Right cardiac atrium (tissue), 5 donors: ENCODE measurements at regions of chr1 and their contacts with region 1.

Region 1: GRCh38 chr1:35988237-35988636 is 57.3 kb downstream of the AGO3 start:
- DNase-seq: no peak
- ATAC-seq: no peak
- H3K4me3 ChIP-seq: no peak overlapping the region
- H3K27ac ChIP-seq: no peak overlapping the region
- H3K4me1 ChIP-seq: no peaks in the 10 kb centered on the region
- H3K27me3 ChIP-seq: no peaks in the 10 kb centered on the region

Region 2: GRCh38 chr1:35622510-35623178 is 365.6 kb before region 1 on chr1:
- intact Hi-C with region 1: loop called in 1 of 4 experiments (anchors 10 kb)
- DNase-seq: no peak
- ATAC-seq: no peak
- H3K4me3 ChIP-seq: no peak overlapping the region
- H3K27ac ChIP-seq: no peak overlapping the region
- H3K4me1 ChIP-seq: no peaks in the 10 kb centered on the region
- H3K27me3 ChIP-seq: no peaks in the 10 kb centered on the region

Region 3: GRCh38 chr1:35882945-35883634 is 105.1 kb before region 1 on chr1 and contains the start of gene AGO1:
- intact Hi-C with region 1: no loop called
- DNase-seq: peak; percentile 95 to 98 (median 97)
- ATAC-seq: peak; percentile 98
- H3K4me3 ChIP-seq: peak within 1 kb of the TSS; percentile 78
- H3K27ac ChIP-seq: peak within 1 kb of the TSS; percentile 42
- H3K4me1 ChIP-seq: peaks cover 13% of the 10 kb centered on the region
- H3K27me3 ChIP-seq: no peaks in the 10 kb centered on the region
- total RNA-seq, gene AGO1: 26.9 to 35.4 (median 29.8) TPM

Region 4: GRCh38 chr1:36099681-36100341 is 111.6 kb after region 1 on chr1:
- intact Hi-C with region 1: no loop called
- DNase-seq: peak; percentile 81 to 95 (median 93)
- ATAC-seq: peak; percentile 79 to 83
- H3K4me3 ChIP-seq: no peak overlapping the region
- H3K27ac ChIP-seq: no peak overlapping the region
- H3K4me1 ChIP-seq: no peaks in the 10 kb centered on the region
- H3K27me3 ChIP-seq: no peaks in the 10 kb centered on the region